Activated CD4-positive, alpha-beta memory T cell treated with anti-CD3 and anti-CD28 coated beads for 36 hours (primary cell): ENCODE measurements at regions of chr2 and their contacts with region 1.

Region 1: GRCh38 chr2:74482801-74483674 is at the starts of genes CCDC142 and TTC31:
- DNase-seq: peak; percentile 96
- H3K4me3 Mint-ChIP-seq: peak within 1 kb of the TSS; percentile 100
- H3K27ac Mint-ChIP-seq: peak within 1 kb of the TSS; percentile 99
- H3K4me1 Mint-ChIP-seq: peaks cover 35% of the 10 kb centered on the region
- H3K27me3 Mint-ChIP-seq: no peaks in the 10 kb centered on the region
- total RNA-seq, gene CCDC142: 10.1 to 10.8 TPM
- total RNA-seq, gene TTC31: 27.3 to 29.1 TPM

Region 2: DNA sequence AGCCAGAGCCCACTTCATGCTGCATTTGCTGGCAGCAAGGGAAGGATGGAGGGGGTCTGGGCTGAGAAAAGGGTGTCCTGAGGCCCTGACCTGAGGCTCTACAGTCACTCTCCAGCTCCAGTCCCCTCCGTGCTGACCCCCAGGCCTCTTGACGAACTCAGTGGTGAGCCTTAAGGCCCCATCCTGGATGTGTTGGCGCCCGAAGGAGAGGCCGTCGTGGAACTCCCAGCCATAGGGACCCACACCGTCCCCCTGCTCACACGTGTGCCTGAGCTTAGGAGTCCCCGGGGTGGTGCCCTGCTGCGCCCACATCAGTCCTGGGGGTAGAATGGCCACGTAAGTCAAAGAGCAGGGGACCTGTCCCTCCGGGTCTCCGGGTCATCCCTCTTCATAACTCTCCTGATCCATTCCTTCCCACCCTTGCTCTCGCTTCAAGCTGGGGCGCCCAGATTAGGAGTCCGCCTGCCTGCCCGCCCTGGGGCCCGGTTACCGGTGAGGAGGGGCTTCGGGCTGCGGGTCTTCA is 18.6 kb before region 1 on chr2:
- CTCF ChIA-PET with region 1: interaction called, 10 read pairs
- POLR2A ChIA-PET with region 1: interaction called, 19 read pairs
- intact Hi-C with region 1: no loop called
- DNase-seq: no peak
- H3K4me3 Mint-ChIP-seq: peak overlapping the region; percentile 98
- H3K27ac Mint-ChIP-seq: peak overlapping the region; percentile 72
- H3K4me1 Mint-ChIP-seq: peaks cover 26% of the 10 kb centered on the region
- H3K27me3 Mint-ChIP-seq: no peaks in the 10 kb centered on the region

Region 3: GRCh38 chr2:74498500-74499266 is 15.6 kb after region 1 on chr2:
- CTCF ChIA-PET with region 1: interaction called, 7 read pairs
- POLR2A ChIA-PET with region 1: interaction called, 4 read pairs
- intact Hi-C with region 1: loop called (anchors 1 kb)
- DNase-seq: peak; percentile 58
- H3K4me3 Mint-ChIP-seq: peak overlapping the region; percentile 75
- H3K27ac Mint-ChIP-seq: peak overlapping the region; percentile 20
- H3K4me1 Mint-ChIP-seq: peaks cover 35% of the 10 kb centered on the region
- H3K27me3 Mint-ChIP-seq: peaks cover 51% of the 10 kb centered on the region

Region 4: DNA sequence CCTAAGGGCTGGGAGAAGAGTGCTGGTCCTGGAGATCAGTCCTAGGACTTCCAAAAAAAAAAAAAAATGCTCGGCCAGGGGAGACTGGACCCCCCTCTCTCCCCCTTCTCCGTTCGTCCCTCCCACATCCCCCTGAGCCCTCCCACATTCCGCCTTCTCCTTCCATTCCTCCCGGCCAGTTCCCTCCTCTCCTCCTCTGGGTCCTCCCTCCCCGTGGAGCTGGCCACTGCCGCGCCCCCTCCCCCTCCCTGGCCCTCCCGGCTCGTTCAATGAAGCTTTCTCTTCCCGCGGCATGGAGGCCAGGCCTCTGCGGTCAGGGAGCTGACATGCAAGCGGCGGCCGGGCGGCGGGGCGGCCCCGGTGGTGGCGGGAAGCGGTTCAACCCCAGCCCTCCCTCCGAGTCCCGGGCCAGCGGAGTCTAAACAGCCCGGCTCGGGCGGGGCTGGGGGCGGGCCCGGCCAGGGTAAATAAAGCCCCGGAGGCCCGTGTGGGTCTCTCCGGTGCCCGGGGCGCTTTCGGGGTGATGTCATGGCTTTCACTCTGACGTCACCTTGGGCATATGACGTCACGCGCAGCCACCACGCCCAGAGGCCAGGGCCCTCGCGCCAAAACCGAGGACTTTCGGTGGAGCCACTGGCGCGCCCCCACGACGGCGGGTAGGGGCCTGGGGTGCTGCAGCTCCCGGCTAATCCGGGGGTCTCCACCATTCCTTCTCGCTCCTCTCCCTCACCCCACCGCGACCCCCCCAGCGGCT is 71.0 kb after region 1 on chr2 and contains the start of gene LOXL3:
- CTCF ChIA-PET with region 1: interaction called, 3 read pairs
- POLR2A ChIA-PET with region 1: no interaction called
- intact Hi-C with region 1: loop called (anchors 2 kb)
- DNase-seq: peak; percentile 87
- H3K4me3 Mint-ChIP-seq: peak within 1 kb of the TSS; percentile 95
- H3K27ac Mint-ChIP-seq: peak within 1 kb of the TSS; percentile 91
- H3K4me1 Mint-ChIP-seq: peaks cover 8% of the 10 kb centered on the region
- H3K27me3 Mint-ChIP-seq: peaks cover 10% of the 10 kb centered on the region
- total RNA-seq, gene LOXL3: 0.90 to 1.1 TPM